ENCODE measurements at regions of chr1 and their contacts with region 1.

Region 1: GRCh38 chr1:200917291-200917817 is 22.7 kb downstream of the INAVA start:
- DNase-seq: no peak
- H3K4me3 ChIP-seq: no peak overlapping the region
- H3K27ac ChIP-seq: no peak overlapping the region
- H3K4me1 ChIP-seq: no peaks in the 10 kb centered on the region
- H3K27me3 ChIP-seq: no peaks in the 10 kb centered on the region
- CTCF ChIP-seq: no peak
- POLR2A ChIP-seq: no peak

Region 2: GRCh38 chr1:200873116-200873670 is 44.2 kb before region 1 on chr1:
- intact Hi-C with region 1: loop called (anchors 2 kb)
- DNase-seq: no peak
- H3K4me3 ChIP-seq: no peak overlapping the region
- H3K27ac ChIP-seq: no peak overlapping the region
- H3K4me1 ChIP-seq: peaks cover 0 to 10% of the 10 kb centered on the region in 2 donors
- H3K27me3 ChIP-seq: peaks cover 5 to 28% of the 10 kb centered on the region in 2 donors
- CTCF ChIP-seq: no peak
- POLR2A ChIP-seq: no peak

Measured in uterus (tissue), 4 donors.